IMR-90 (cell line): ENCODE measurements at regions of chr10 and their contacts with region 1.

Region 1: GRCh38 chr10:122854648-122855047 is 9.0 kb upstream of the CUZD1 start:
- DNase-seq: peak; percentile 92
- ATAC-seq: peak; percentile 49
- H3K4me3 ChIP-seq: no peak overlapping the region
- H3K27ac ChIP-seq: 0 out of 2 replicates have a peak overlapping the region, but pooled peaks have one; percentile 17
- H3K4me1 ChIP-seq: peaks cover 33% of the 10 kb centered on the region
- H3K27me3 ChIP-seq: no peaks in the 10 kb centered on the region
- CTCF ChIP-seq: no peak
- POLR2A ChIP-seq: peak; percentile 44; the same call in 1 of the 2 replicates
- RAD21 ChIP-seq: no peak

Region 2: GRCh38 chr10:122163174-122164022 is 691.2 kb before region 1 on chr10:
- CTCF ChIA-PET with region 1: no interaction called
- POLR2A ChIA-PET with region 1: no interaction called
- dilution Hi-C with region 1: no loop called
- in situ Hi-C with region 1: loop called (anchors 25 kb)
- intact Hi-C with region 1: no loop called
- DNase-seq: peak; percentile 52
- ATAC-seq: peak; percentile 76
- H3K4me3 ChIP-seq: peak overlapping the region; percentile 47
- H3K27ac ChIP-seq: no peak overlapping the region
- H3K4me1 ChIP-seq: peaks cover 3% of the 10 kb centered on the region; the same call in 1 of the 2 replicates
- H3K27me3 ChIP-seq: no peaks in the 10 kb centered on the region
- CTCF ChIP-seq: no peak
- POLR2A ChIP-seq: no peak
- RAD21 ChIP-seq: no peak

Region 3: GRCh38 chr10:122362621-122363020 is 492.0 kb before region 1 on chr10:
- CTCF ChIA-PET with region 1: no interaction called
- POLR2A ChIA-PET with region 1: no interaction called
- dilution Hi-C with region 1: no loop called
- in situ Hi-C with region 1: no loop called
- intact Hi-C with region 1: no loop called
- DNase-seq: no peak
- ATAC-seq: no peak
- H3K4me3 ChIP-seq: no peak overlapping the region
- H3K27ac ChIP-seq: no peak overlapping the region
- H3K4me1 ChIP-seq: no peaks in the 10 kb centered on the region
- H3K27me3 ChIP-seq: peaks cover 21% of the 10 kb centered on the region
- CTCF ChIP-seq: no peak
- POLR2A ChIP-seq: no peak
- RAD21 ChIP-seq: no peak

Region 4: DNA sequence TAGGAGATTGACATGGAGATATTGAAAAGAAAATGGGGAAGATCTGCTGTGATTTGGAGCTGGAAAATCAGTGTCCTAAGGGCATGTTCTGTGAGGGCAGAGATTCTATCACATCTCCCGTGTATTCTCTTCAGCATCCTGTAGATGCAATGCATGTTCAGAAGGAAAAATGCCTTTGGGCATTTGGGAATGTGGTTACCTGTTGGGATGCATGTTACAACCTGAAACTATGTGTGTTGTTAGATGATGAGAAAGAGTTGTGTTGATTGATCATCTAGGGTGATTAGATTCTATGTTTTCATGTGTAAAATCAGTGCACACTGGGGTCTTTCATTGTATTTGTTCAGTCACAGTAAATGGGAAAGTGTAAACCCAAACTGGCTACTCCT is 23.7 kb before region 1 on chr10:
- CTCF ChIA-PET with region 1: no interaction called
- POLR2A ChIA-PET with region 1: no interaction called
- dilution Hi-C with region 1: no loop called
- in situ Hi-C with region 1: no loop called
- intact Hi-C with region 1: no loop called
- DNase-seq: no peak
- ATAC-seq: no peak
- H3K4me3 ChIP-seq: no peak overlapping the region
- H3K27ac ChIP-seq: no peak overlapping the region
- H3K4me1 ChIP-seq: no peaks in the 10 kb centered on the region
- H3K27me3 ChIP-seq: peaks cover 2% of the 10 kb centered on the region
- CTCF ChIP-seq: no peak
- POLR2A ChIP-seq: no peak
- RAD21 ChIP-seq: no peak

Region 5: GRCh38 chr10:122953827-122954730 is 99.4 kb after region 1 on chr10 and contains the start of gene C10orf88:
- CTCF ChIA-PET with region 1: no interaction called
- POLR2A ChIA-PET with region 1: no interaction called
- dilution Hi-C with region 1: no loop called
- in situ Hi-C with region 1: no loop called
- intact Hi-C with region 1: loop called (anchors 5 kb)
- DNase-seq: peak; percentile 99
- ATAC-seq: peak; percentile 99
- H3K4me3 ChIP-seq: peak within 1 kb of the TSS; percentile 58
- H3K27ac ChIP-seq: peak within 1 kb of the TSS; percentile 57
- H3K4me1 ChIP-seq: no peaks in the 10 kb centered on the region
- H3K27me3 ChIP-seq: no peaks in the 10 kb centered on the region
- CTCF ChIP-seq: no peak
- POLR2A ChIP-seq: no peak
- RAD21 ChIP-seq: no peak; the same call in 1 of the 2 replicates
- total RNA-seq, gene C10orf88: 12.2 and 16.4 TPM in 2 replicates

Region 6: GRCh38 chr10:123154092-123154921 is 299.7 kb after region 1 on chr10 and contains the start of gene BUB3:
- CTCF ChIA-PET with region 1: no interaction called
- POLR2A ChIA-PET with region 1: no interaction called
- dilution Hi-C with region 1: no loop called
- in situ Hi-C with region 1: loop called (anchors 25 kb)
- intact Hi-C with region 1: loop called (anchors 10 kb)
- DNase-seq: peak; percentile 100
- ATAC-seq: peak; percentile 94
- H3K4me3 ChIP-seq: peak within 1 kb of the TSS; percentile 79
- H3K27ac ChIP-seq: peak within 1 kb of the TSS; percentile 75
- H3K4me1 ChIP-seq: peaks cover 1% of the 10 kb centered on the region
- H3K27me3 ChIP-seq: peaks cover 28% of the 10 kb centered on the region
- CTCF ChIP-seq: no peak
- POLR2A ChIP-seq: peak; percentile 94
- RAD21 ChIP-seq: no peak
- total RNA-seq, gene BUB3: 346 and 384 TPM in 2 replicates

Region 7: DNA sequence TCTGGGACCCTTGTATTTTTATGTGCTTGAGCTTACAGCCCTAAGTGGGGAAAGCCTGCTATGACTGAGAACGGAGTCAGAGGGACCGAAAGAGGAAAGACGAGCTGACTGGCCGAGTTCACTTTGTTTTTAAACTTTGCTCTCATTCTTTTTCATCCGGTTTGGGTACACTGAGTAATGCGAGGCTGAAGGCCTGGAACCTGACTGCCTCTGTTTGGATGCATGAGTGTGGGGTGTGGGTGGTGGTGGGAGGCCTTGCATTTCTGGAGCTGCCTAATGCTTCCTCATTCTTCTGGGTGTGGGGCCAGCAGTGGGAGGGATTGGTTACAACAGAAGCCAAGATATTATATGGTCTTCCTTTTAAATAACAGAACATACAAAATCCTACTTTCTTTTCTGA is 455.1 kb after region 1 on chr10:
- CTCF ChIA-PET with region 1: no interaction called
- POLR2A ChIA-PET with region 1: no interaction called
- dilution Hi-C with region 1: no loop called
- in situ Hi-C with region 1: no loop called
- intact Hi-C with region 1: no loop called
- DNase-seq: no peak
- ATAC-seq: no peak
- H3K4me3 ChIP-seq: no peak overlapping the region
- H3K27ac ChIP-seq: no peak overlapping the region
- H3K4me1 ChIP-seq: no peaks in the 10 kb centered on the region
- H3K27me3 ChIP-seq: no peaks in the 10 kb centered on the region
- CTCF ChIP-seq: no peak
- POLR2A ChIP-seq: no peak
- RAD21 ChIP-seq: no peak